GM13977 (cell line): ENCODE measurements at regions of chr5 and their contacts with region 1.

Region 1: GRCh38 chr5:82225525-82226172 is 52.5 kb downstream of the RPS23 start:
- DNase-seq: peak; percentile 53
- CTCF ChIP-seq: peak; percentile 84

Region 2: DNA sequence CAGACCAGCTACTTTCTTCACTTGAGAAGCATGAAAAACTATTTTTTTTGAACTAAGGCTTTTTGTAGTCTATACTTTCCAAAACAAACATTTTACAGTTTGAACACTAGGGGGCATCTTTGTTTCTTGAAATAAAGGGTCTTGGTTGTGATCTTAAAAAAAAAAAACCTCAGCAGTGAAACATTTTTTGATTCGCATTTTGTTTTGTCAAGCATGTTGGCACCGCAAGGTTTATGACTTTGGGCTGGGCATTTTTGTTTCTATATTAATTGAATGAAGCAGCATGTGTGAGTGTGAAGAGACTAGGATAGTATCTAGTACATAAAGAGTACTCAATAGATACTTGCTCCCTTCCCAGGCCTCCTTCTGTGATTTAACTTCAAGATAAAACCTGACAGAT is 800.1 kb before region 1 on chr5:
- in situ Hi-C with region 1: loop called (anchors 10 kb)
- DNase-seq: peak; percentile 42
- CTCF ChIP-seq: peak; percentile 38

Region 3: DNA sequence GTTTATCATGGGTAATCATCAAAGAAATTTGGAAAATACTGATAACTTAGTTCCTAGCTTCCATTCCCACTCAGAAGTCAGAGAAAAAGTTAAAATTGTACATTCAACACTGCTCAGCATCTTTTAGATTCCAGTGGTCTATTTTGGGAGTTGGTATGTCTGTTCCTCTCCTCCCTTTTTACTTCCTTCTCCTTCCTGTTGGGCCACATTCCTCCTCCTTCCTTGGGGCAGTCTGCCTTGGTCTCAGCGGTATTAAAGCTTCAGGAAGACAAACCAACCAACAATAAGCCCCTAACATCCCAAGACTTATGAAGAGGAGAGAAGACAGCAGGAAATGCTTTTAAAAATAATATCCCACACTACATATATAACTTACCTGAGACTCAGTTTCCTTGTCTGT is 424.9 kb before region 1 on chr5:
- in situ Hi-C with region 1: no loop called
- DNase-seq: no peak
- CTCF ChIP-seq: no peak